Activated CD8-positive, alpha-beta T cell treated with anti-CD3 and anti-CD28 coated beads, Interleukin-2, amount 10 ng/mL, durations not matched to agents 7 days and 5 days (primary cell): ENCODE measurements at regions of chr5 and their contacts with region 1.

Region 1: DNA sequence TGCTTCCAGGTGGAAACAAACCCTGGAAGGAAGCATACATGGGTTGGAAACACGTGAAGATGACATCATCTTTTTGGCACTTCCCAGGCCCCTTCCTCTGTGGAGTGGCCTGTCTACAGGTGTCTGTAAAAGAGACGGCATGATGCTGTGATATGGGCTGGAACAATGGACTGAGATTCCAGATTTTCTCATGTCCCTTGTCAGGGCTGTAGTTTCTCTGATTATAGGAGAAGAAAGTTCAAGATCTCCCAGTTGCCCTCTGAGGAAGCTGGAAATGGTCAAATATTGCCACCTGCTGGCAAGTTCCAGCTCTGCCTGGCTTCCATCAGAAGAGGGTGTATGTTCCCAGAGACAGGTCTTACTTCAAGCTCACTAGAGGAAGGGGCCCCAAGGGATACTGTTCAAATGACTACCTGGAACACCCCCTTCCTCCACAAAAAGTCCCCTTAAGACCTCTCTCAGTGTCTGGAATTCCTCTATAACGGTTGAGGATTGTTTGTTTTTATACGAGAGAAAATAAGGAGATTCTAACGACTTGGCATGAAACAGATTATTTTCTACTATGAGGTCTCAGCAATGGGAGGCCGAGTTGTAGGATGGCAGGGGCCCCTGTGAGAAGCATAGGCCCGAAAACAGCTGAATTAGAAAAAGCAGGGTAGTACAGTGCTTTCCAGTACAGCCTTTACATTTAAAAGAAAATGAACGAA is 7.3 kb upstream of the ANXA6 start:
- DNase-seq: peak; percentile 88
- ATAC-seq: peak; percentile 98
- H3K4me3 Mint-ChIP-seq: no peak overlapping the region
- H3K27ac Mint-ChIP-seq: no peak overlapping the region
- H3K4me1 Mint-ChIP-seq: peaks cover 9% of the 10 kb centered on the region
- H3K27me3 Mint-ChIP-seq: peaks cover 4% of the 10 kb centered on the region

Region 2: GRCh38 chr5:150689120-150689519 is 475.7 kb before region 1 on chr5:
- CTCF ChIA-PET with region 1: no interaction called
- POLR2A ChIA-PET with region 1: no interaction called
- DNase-seq: no peak
- ATAC-seq: no peak
- H3K4me3 Mint-ChIP-seq: no peak overlapping the region
- H3K27ac Mint-ChIP-seq: no peak overlapping the region
- H3K4me1 Mint-ChIP-seq: no peaks in the 10 kb centered on the region
- H3K27me3 Mint-ChIP-seq: no peaks in the 10 kb centered on the region

Region 3: GRCh38 chr5:151051066-151051930 is 113.5 kb before region 1 on chr5:
- CTCF ChIA-PET with region 1: interaction called, 97 read pairs
- POLR2A ChIA-PET with region 1: no interaction called
- DNase-seq: peak; percentile 83
- ATAC-seq: peak; percentile 84
- H3K4me3 Mint-ChIP-seq: no peak overlapping the region
- H3K27ac Mint-ChIP-seq: peak overlapping the region; percentile 40
- H3K4me1 Mint-ChIP-seq: peaks cover 14% of the 10 kb centered on the region
- H3K27me3 Mint-ChIP-seq: no peaks in the 10 kb centered on the region

Region 4: GRCh38 chr5:151126199-151126645 is 38.6 kb before region 1 on chr5:
- CTCF ChIA-PET with region 1: interaction called, 491 read pairs
- POLR2A ChIA-PET with region 1: interaction called, 13 read pairs
- DNase-seq: peak; percentile 78
- ATAC-seq: peak; percentile 67
- H3K4me3 Mint-ChIP-seq: no peak overlapping the region
- H3K27ac Mint-ChIP-seq: peak overlapping the region; percentile 88
- H3K4me1 Mint-ChIP-seq: peaks cover 43% of the 10 kb centered on the region
- H3K27me3 Mint-ChIP-seq: no peaks in the 10 kb centered on the region

Region 5: DNA sequence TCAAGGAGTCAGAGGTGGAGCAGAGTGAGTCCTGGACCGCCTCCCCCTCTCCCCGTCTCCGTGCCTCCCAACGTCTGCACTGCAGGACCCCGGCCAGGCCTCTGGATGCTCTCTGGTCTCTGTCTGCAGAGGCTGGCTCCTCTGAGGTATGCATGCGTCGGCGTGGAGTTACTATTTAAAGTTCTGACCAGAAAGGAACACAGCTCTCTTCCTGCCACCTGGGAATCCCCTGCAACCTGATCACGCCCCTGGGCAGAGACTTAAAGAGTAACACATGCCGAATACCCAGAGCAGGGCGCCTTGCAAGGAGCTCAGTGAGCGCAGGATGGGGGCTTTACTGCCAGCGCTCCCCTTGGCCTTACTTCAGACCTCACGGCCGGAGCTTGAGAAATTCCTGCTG is 23.3 kb before region 1 on chr5:
- CTCF ChIA-PET with region 1: interaction called, 74 read pairs
- POLR2A ChIA-PET with region 1: interaction called, 3 read pairs
- DNase-seq: peak; percentile 70
- ATAC-seq: peak; percentile 79
- H3K4me3 Mint-ChIP-seq: peak overlapping the region; percentile 58
- H3K27ac Mint-ChIP-seq: peak overlapping the region; percentile 76
- H3K4me1 Mint-ChIP-seq: peaks cover 93% of the 10 kb centered on the region
- H3K27me3 Mint-ChIP-seq: no peaks in the 10 kb centered on the region

Region 6: DNA sequence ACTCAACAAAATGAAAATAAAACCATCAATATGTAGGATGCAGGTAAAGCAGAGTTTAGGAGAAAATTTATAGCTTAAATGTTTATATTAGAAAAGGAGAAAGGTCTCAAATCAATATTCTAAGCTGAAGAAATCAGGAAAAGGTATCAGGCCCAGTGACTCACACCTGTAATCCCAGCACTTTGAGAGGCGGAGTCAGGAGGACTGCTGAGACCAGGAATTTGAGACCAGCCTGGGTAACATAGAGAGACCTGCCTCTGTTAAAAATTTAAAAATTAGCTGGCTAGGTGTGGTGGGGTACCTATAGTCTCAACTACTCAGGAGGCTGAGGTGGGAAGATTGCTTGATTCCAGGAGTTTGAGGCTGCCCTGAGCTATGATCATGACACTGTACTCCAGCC is 26.8 kb after region 1 on chr5:
- CTCF ChIA-PET with region 1: interaction called, 23 read pairs
- POLR2A ChIA-PET with region 1: no interaction called
- DNase-seq: no peak
- ATAC-seq: no peak
- H3K4me3 Mint-ChIP-seq: no peak overlapping the region
- H3K27ac Mint-ChIP-seq: no peak overlapping the region
- H3K4me1 Mint-ChIP-seq: peaks cover 29% of the 10 kb centered on the region
- H3K27me3 Mint-ChIP-seq: no peaks in the 10 kb centered on the region

Region 7: DNA sequence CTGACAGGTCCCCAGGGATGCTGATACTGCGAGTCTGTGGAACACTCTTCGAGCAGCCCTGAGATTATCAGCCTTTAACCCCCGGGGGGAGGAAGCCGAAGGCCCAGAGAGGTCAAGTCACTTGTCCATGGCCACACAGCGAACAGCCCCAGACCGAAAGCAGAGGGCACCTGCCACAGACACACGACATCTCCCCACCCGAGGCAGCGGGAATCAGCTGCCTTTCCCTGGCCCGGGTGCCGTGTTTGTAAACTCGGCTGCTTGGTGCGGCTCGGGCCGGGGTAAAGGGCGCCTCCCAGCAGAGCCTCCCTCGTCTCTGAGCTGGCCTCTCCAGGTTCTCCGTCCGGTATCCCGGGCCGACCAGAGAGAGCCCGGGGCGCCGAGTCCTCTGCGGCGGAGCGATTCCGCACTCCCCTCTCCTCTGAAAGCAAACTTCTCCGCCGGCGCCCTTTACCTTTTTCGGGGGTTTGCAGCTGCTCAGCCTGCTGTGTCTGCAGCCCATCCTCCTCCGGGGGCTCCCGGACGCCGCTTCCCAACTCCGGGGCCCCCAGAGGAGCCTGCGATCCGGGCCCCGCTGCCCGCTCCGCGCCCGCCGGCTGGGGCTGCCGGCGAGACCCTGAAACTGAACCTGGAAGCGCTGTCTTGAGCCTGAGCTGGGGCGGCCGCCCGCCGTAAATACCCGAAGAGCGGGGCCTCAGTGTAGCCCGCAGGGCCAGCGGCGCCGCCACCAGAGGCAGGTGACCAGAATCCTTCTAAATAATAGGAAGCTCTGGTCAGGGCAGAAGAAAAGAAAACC is 58.8 kb after region 1 on chr5 and contains the start of gene CCDC69:
- CTCF ChIA-PET with region 1: interaction called, 14 read pairs
- POLR2A ChIA-PET with region 1: interaction called, 3 read pairs
- DNase-seq: peak; percentile 71
- ATAC-seq: peak; percentile 77
- H3K4me3 Mint-ChIP-seq: peak within 1 kb of the TSS; percentile 85
- H3K27ac Mint-ChIP-seq: peak within 1 kb of the TSS; percentile 91
- H3K4me1 Mint-ChIP-seq: peaks cover 55% of the 10 kb centered on the region
- H3K27me3 Mint-ChIP-seq: no peaks in the 10 kb centered on the region
- total RNA-seq, gene CCDC69: 87.6 to 92.7 TPM

Region 8: DNA sequence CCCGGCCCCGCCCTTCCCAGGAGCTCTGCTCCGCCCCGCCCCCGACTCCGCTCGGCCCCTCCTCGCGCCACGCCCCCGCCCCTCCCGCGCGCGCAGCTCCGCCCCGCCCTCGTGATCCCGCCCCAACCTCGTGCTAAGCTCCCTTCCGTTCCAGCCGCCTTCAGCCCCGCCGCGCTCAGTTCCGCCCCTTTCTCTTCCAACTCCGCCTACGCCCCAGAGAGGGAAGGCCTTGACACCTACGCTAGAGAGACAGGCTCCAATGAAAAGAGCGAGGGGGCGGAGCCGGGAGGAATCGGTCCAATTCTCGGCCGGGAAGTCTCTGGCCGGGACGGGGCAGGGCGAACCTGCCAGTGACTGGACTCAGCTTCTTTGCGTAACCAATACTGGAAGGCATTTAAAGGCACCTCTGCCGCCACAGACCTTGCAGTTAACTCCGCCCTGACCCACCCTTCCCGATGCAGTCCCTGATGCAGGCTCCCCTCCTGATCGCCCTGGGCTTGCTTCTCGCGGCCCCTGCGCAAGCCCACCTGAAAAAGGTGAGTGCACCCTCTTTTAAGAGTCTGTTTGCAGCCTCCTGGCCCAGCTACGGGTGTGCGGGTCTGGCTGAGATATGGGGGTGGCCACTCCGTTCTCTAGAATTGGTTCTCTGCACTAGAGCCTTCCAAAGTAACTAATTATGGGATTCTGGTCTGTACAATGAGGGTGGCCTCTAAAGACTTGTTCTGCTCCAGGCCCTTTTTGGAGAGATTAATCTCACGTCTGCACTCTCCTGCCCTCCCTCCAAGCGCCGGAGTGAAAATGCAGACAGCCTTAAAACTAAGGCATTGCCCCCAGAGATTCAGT is 88.1 kb after region 1 on chr5 and contains the start of gene GM2A:
- CTCF ChIA-PET with region 1: interaction called, 12 read pairs
- POLR2A ChIA-PET with region 1: no interaction called
- DNase-seq: peak; percentile 99
- ATAC-seq: peak; percentile 98
- H3K4me3 Mint-ChIP-seq: peak within 1 kb of the TSS; percentile 88
- H3K27ac Mint-ChIP-seq: peak within 1 kb of the TSS; percentile 93
- H3K4me1 Mint-ChIP-seq: peaks cover 39% of the 10 kb centered on the region
- H3K27me3 Mint-ChIP-seq: no peaks in the 10 kb centered on the region
- total RNA-seq, gene GM2A: 19.5 to 19.6 TPM

Region 9: GRCh38 chr5:151267171-151267885 is 102.5 kb after region 1 on chr5:
- CTCF ChIA-PET with region 1: no interaction called
- POLR2A ChIA-PET with region 1: no interaction called
- DNase-seq: no peak
- ATAC-seq: no peak
- H3K4me3 Mint-ChIP-seq: no peak overlapping the region
- H3K27ac Mint-ChIP-seq: no peak overlapping the region
- H3K4me1 Mint-ChIP-seq: no peaks in the 10 kb centered on the region
- H3K27me3 Mint-ChIP-seq: no peaks in the 10 kb centered on the region